Transverse colon (tissue), 4 donors: ENCODE measurements at regions of chr4 and their contacts with region 1.

Region 1: GRCh38 chr4:73019462-73020047 is 50.0 kb downstream of the COX18 start:
- DNase-seq: no peak
- H3K4me3 ChIP-seq: no peak overlapping the region
- H3K27ac ChIP-seq: no peak overlapping the region
- H3K4me1 ChIP-seq: no peaks in the 10 kb centered on the region
- H3K27me3 ChIP-seq: no peaks in the 10 kb centered on the region
- CTCF ChIP-seq: peak; percentile 50 to 67 (median 65)
- EP300 ChIP-seq: no peak
- POLR2A ChIP-seq: no peak

Region 2: GRCh38 chr4:72295966-72296557 is 723.5 kb before region 1 on chr4:
- in situ Hi-C with region 1: loop called in 2 of 4 experiments (anchors 25 kb)
- intact Hi-C with region 1: no loop called
- DNase-seq: no peak
- H3K4me3 ChIP-seq: no peak overlapping the region
- H3K27ac ChIP-seq: no peak overlapping the region
- H3K4me1 ChIP-seq: no peaks in the 10 kb centered on the region
- H3K27me3 ChIP-seq: no peaks in the 10 kb centered on the region
- CTCF ChIP-seq: peak in 4 of 5 experiments; percentile 40 to 63 (median 52)
- EP300 ChIP-seq: no peak
- POLR2A ChIP-seq: no peak

Region 3: DNA sequence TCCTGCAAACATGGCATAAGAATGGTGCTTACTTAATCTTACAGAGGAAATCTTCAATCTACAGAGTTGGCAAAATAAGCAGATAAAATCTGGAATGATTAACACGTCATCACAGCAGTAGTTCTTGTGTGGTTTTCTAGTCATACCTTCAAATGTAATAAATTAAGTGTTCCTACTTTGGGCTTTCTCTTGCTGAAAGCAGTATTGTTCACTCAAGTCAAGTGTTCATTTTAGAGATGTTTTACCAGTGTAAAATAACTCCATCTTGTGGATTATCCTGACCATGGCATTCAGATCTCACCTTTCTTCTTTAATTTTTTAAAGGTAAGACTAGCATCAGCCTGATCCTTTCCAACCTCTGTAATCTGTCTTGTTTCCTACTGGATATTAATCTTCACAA is 523.4 kb before region 1 on chr4:
- in situ Hi-C with region 1: loop called (anchors 25 kb)
- intact Hi-C with region 1: loop called (anchors 10 kb)
- DNase-seq: no peak
- H3K4me3 ChIP-seq: no peak overlapping the region
- H3K27ac ChIP-seq: no peak overlapping the region
- H3K4me1 ChIP-seq: no peaks in the 10 kb centered on the region
- H3K27me3 ChIP-seq: no peaks in the 10 kb centered on the region
- CTCF ChIP-seq: no peak
- EP300 ChIP-seq: no peak
- POLR2A ChIP-seq: no peak

Region 4: DNA sequence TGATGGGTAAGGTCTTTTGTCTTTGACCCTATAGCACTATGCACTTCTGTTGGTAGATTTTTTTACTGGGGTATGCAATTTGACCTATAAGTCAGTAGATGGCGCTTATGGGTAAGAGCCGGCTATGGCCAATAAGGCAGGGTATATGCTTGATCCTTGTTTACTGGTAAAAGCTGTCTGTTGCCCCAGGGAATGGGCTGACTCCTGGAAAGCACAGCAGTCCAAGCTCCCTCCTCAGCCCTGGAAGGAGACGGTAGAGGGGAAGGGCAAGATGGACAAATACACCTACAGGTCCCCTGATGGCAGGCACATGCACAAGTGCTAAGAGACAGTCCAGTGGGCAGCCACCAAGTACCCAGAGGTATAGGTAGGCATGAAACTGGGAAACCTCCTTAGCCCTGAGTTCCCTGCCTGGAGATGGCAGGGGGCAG is 514.2 kb before region 1 on chr4:
- in situ Hi-C with region 1: loop called in 3 of 4 experiments (anchors 25 kb)
- intact Hi-C with region 1: loop called (anchors 10 kb)
- DNase-seq: no peak
- H3K4me3 ChIP-seq: no peak overlapping the region
- H3K27ac ChIP-seq: no peak overlapping the region
- H3K4me1 ChIP-seq: no peaks in the 10 kb centered on the region
- H3K27me3 ChIP-seq: no peaks in the 10 kb centered on the region
- CTCF ChIP-seq: peak; percentile 33 to 58 (median 55)
- EP300 ChIP-seq: no peak
- POLR2A ChIP-seq: no peak

Region 5: GRCh38 chr4:72701987-72702819 is 317.4 kb before region 1 on chr4:
- in situ Hi-C with region 1: loop called in 3 of 4 experiments (anchors 10 to 25 kb)
- intact Hi-C with region 1: no loop called
- DNase-seq: no peak
- H3K4me3 ChIP-seq: peak overlapping the region in 3 of 4 donors; percentile 1 to 39 (median 11)
- H3K27ac ChIP-seq: no peak overlapping the region
- H3K4me1 ChIP-seq: no peaks in the 10 kb centered on the region
- H3K27me3 ChIP-seq: no peaks in the 10 kb centered on the region
- CTCF ChIP-seq: peak; percentile 18 to 47 (median 34)
- EP300 ChIP-seq: no peak
- POLR2A ChIP-seq: no peak

Region 6: GRCh38 chr4:73222466-73223257 is 203.1 kb after region 1 on chr4:
- in situ Hi-C with region 1: no loop called
- intact Hi-C with region 1: no loop called
- DNase-seq: peak; percentile 46
- H3K4me3 ChIP-seq: peak overlapping the region in 3 of 4 donors; percentile 26 to 60 (median 35)
- H3K27ac ChIP-seq: peak overlapping the region; percentile 70 to 92 (median 87)
- H3K4me1 ChIP-seq: peaks cover 12 to 38% (median 19%) of the 10 kb centered on the region in 4 donors
- H3K27me3 ChIP-seq: no peaks in the 10 kb centered on the region
- CTCF ChIP-seq: no peak
- EP300 ChIP-seq: no peak
- POLR2A ChIP-seq: peak; percentile 67

Region 7: GRCh38 chr4:73828956-73829355 is 809.4 kb after region 1 on chr4:
- in situ Hi-C with region 1: no loop called
- intact Hi-C with region 1: no loop called
- DNase-seq: no peak
- H3K4me3 ChIP-seq: no peak overlapping the region
- H3K27ac ChIP-seq: no peak overlapping the region
- H3K4me1 ChIP-seq: no peaks in the 10 kb centered on the region
- H3K27me3 ChIP-seq: no peaks in the 10 kb centered on the region
- CTCF ChIP-seq: no peak
- EP300 ChIP-seq: no peak
- POLR2A ChIP-seq: no peak